ENCODE measurements at regions of chr16 and their contacts with region 1.

Region 1: DNA sequence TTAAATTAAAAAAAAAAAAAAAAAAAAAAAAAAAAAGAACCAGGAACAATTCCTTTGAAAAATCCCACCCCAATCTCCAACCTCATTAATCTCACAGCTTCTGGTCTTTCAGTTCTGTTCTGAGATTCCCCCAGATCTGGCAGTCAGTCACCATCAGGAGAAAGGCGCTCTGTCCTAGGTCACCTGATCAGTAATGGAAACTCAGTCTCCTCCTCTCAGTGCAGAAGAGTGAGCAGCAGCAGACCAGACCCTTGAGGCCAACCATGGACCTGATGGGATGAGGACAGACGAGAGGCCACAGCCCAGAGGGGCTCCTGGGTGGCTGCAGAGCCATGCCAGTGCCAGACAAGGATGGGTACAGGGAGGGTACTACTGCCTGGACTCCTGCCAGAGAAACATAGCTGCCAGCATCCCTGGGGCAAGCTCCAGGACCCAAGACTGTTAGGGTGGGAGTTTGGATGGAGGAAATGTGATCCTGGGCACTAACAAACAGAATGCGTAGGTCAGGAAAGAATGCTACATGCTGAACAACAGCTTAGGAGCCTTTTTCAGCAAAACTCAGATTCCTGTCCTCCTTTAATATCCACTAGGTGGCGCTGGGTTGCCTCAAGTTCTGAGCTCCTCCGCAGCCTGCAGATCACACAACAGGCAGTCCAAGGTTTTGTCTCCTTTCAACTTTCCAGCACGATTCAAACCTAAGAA is 28.7 kb downstream of the MPG start:
- DNase-seq: peak in 6 of 10 donors; percentile 61 to 91 (median 74)

Region 2: GRCh38 chr16:129075-129474 is 22.3 kb after region 1 on chr16:
- intact Hi-C with region 1: no loop called
- DNase-seq: peak in 2 of 10 donors; percentile 4 to 27

Region 3: DNA sequence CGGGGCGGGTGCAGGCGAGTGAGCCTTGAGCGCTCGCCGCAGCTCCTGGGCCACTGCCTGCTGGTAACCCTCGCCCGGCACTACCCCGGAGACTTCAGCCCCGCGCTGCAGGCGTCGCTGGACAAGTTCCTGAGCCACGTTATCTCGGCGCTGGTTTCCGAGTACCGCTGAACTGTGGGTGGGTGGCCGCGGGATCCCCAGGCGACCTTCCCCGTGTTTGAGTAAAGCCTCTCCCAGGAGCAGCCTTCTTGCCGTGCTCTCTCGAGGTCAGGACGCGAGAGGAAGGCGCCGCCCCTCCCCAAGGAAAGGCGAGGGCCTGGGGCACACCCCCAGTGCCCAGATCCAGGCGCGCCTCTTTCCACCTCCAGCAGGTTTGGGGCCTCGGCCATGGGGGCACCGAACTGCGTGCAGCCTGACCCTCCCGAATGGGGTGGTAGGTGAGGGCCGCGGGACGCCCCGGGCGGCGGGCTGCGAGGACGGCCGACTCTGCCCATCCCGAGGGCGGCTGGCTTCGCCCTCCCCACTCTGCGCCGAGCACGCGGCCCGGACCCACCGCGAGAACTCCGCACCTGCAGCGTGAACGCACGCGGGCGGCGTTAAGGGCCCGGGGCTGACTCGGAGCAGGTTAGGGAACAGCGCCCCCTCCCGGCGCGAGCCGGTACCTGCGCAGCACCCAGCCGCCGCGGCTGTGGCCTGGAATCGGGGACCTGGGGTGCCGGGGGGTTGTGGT is 74.3 kb after region 1 on chr16:
- intact Hi-C with region 1: loop called (anchors 2 kb)
- DNase-seq: peak; percentile 36 to 96 (median 70)

Region 4: DNA sequence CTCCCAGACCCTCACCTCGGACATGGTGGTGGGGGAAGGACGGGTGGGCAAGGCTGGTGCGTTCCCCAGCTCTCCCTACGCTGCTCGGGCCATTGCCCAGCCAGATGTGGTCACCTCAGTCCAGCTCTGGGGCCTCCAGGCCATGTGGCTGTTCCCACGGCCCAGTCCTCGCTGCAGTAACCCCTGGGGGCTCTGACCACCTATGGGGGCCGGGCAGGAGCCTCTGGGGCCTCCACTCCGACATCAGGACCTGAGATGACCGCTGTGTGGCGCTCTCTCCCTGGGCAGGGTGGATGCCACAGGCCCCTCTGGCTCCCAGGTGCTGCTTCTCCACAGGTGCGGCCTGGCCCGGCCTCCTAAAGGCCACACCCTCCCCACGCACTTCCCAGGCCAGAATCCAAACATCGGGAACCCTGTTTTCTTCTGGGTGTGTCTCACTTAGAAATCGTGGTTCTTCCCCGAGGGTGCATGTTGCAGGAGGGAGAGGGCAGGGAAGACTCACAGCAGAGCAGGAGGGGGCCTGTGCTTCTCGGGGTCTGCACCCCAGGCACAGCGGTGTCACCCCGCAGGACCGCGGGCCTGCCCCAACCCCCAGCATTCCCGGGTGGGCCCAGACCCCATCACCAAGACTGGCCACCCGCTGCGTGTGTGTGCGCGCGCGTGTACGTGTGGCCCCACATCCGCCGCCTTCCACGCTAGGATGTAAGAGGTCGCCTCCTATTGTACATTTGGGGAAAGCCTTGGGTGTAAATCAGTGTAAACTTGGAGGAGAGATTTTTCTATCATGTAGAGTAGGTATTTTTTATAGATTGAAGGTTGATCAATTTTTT is 414.8 kb after region 1 on chr16:
- intact Hi-C with region 1: no loop called
- DNase-seq: no peak